B cell (primary cell): ENCODE measurements at regions of chr7 and their contacts with region 1.

Region 1: GRCh38 chr7:150404805-150405583 is 25.9 kb downstream of the ZNF775 start:
- DNase-seq: peak; percentile 93
- ATAC-seq: peak; percentile 50
- H3K4me3 ChIP-seq: peak overlapping the region; percentile 61 to 90 (median 74)
- H3K4me3 Mint-ChIP-seq: peak overlapping the region; percentile 97
- H3K27ac ChIP-seq: peak overlapping the region; percentile 93 to 97
- H3K27ac Mint-ChIP-seq: peak overlapping the region; percentile 100
- H3K4me1 ChIP-seq: peaks cover 49 to 63% of the 10 kb centered on the region in 2 donors
- H3K4me1 Mint-ChIP-seq: peaks cover 62% of the 10 kb centered on the region
- H3K27me3 ChIP-seq: no peaks in the 10 kb centered on the region
- H3K27me3 Mint-ChIP-seq: no peaks in the 10 kb centered on the region
- CTCF ChIP-seq: peak; percentile 25

Region 2: DNA sequence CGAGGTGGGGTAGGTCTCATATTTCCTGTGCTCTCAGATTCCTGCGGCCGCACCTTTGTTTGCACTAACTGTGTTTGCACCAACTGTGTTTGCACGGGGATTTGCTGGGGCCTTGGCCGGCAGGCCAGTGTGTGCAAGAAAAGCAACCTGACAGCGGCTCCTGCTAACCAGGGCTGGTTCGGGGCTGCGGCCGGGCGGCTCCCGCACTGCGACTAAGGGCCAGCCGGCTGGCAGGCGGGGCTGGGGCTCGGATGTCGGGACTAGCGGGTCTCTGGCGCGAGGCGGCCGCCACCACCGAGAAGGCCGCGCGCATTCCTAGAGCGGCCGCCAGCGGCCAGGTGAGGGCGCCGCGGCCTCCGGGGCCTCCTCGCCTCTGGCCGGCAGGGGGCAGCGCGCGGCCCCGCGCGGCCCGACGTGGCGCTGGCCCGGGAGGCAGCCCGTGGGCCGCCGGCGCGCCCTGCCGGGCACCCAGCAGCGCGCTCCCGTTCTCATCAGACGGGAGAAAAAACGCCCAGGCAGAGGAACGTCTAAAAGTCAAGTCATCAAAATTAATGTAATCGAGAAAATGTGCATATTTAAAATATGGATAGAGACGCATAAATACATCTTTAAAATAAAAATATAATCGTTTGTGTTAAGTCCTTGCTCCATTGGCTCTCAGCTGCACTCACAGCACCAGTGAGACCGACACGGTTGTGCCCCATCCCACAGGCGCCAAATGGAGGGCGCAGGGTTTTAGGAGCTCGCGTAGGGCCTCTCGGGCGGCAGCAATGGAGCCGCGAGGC is 982.7 kb before region 1 on chr7:
- CTCF ChIA-PET with region 1: no interaction called
- POLR2A ChIA-PET with region 1: no interaction called
- intact Hi-C with region 1: loop called (anchors 10 kb)
- DNase-seq: peak; percentile 89
- ATAC-seq: peak; percentile 98
- H3K4me3 ChIP-seq: peak overlapping the region; percentile 58 to 71 (median 60)
- H3K4me3 Mint-ChIP-seq: peak overlapping the region; percentile 83
- H3K27ac ChIP-seq: peak overlapping the region; percentile 20 to 73
- H3K27ac Mint-ChIP-seq: peak overlapping the region; percentile 81
- H3K4me1 ChIP-seq: peaks cover 10 to 12% of the 10 kb centered on the region in 2 donors
- H3K4me1 Mint-ChIP-seq: peaks cover 8% of the 10 kb centered on the region
- H3K27me3 ChIP-seq: no peaks in the 10 kb centered on the region
- H3K27me3 Mint-ChIP-seq: no peaks in the 10 kb centered on the region
- CTCF ChIP-seq: peak; percentile 63

Region 3: DNA sequence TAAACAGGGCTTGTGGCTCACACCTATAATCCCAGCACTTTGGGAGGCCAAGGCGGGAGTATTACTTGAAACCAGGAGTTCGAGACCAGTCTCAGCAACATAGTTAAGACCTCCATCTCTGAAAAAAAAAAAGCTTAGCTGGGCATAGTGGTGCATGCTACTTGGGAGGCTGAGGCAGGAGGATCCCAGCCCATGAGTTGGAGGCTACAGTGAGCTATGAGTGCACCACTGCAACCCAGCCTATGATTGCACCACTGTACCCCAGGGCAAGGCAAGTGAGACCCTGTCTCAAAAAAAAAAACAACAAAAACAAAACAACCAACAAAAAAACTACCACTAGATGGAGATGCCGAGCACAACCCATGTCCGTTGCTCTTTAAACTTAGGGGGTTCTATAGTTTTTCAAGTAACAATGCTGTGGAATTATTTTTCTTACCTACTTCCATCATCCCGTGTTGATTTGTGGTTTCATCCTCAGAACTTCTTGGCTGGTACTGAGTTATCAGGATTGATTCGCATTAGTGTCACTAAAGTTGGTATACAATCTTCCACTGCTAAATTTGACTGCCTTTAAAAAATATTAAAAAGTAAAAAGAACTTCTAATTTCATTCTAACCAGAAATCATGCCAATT is 48.6 kb before region 1 on chr7:
- CTCF ChIA-PET with region 1: interaction called, 40 read pairs
- POLR2A ChIA-PET with region 1: no interaction called
- intact Hi-C with region 1: loop called (anchors 1 kb)
- DNase-seq: peak; percentile 75
- ATAC-seq: peak; percentile 56
- H3K4me3 ChIP-seq: no peak overlapping the region
- H3K4me3 Mint-ChIP-seq: no peak overlapping the region
- H3K27ac ChIP-seq: no peak overlapping the region
- H3K27ac Mint-ChIP-seq: no peak overlapping the region
- H3K4me1 ChIP-seq: peaks cover 11 to 19% of the 10 kb centered on the region in 2 donors
- H3K4me1 Mint-ChIP-seq: peaks cover 21% of the 10 kb centered on the region
- H3K27me3 ChIP-seq: no peaks in the 10 kb centered on the region
- H3K27me3 Mint-ChIP-seq: no peaks in the 10 kb centered on the region
- CTCF ChIP-seq: peak; percentile 89

Region 4: DNA sequence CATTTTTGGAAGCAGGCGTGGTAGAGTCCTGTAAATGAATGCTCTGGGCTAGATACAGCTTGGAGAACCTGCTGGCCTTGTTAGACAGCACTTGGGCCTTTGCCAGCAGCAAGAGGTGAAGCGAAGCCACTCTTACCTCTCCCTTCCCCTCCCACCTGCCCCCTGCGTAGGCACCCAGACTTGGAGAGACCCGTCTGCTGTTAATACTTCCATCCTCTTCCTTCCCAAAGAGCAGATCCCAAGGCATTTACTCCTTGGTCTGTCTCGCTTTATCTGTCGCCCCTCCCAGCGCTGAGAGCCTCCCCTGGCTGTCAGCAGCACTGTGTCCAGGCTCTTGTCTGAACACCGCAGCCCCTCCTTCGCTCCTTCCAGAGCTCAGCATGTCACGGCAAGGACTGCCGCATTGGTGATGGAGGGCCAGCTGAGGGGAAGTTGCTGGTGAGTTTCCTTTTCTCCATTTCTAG is 31.6 kb before region 1 on chr7:
- CTCF ChIA-PET with region 1: interaction called, 71 read pairs
- POLR2A ChIA-PET with region 1: interaction called, 120 read pairs
- intact Hi-C with region 1: no loop called
- DNase-seq: no peak
- ATAC-seq: no peak
- H3K4me3 ChIP-seq: no peak overlapping the region
- H3K4me3 Mint-ChIP-seq: peak overlapping the region; percentile 56
- H3K27ac ChIP-seq: peak overlapping the region in 1 of 2 donors; percentile 36
- H3K27ac Mint-ChIP-seq: peak overlapping the region; percentile 72
- H3K4me1 ChIP-seq: peaks cover 23 to 58% of the 10 kb centered on the region in 2 donors
- H3K4me1 Mint-ChIP-seq: peaks cover 76% of the 10 kb centered on the region
- H3K27me3 ChIP-seq: no peaks in the 10 kb centered on the region
- H3K27me3 Mint-ChIP-seq: no peaks in the 10 kb centered on the region
- CTCF ChIP-seq: no peak

Region 5: DNA sequence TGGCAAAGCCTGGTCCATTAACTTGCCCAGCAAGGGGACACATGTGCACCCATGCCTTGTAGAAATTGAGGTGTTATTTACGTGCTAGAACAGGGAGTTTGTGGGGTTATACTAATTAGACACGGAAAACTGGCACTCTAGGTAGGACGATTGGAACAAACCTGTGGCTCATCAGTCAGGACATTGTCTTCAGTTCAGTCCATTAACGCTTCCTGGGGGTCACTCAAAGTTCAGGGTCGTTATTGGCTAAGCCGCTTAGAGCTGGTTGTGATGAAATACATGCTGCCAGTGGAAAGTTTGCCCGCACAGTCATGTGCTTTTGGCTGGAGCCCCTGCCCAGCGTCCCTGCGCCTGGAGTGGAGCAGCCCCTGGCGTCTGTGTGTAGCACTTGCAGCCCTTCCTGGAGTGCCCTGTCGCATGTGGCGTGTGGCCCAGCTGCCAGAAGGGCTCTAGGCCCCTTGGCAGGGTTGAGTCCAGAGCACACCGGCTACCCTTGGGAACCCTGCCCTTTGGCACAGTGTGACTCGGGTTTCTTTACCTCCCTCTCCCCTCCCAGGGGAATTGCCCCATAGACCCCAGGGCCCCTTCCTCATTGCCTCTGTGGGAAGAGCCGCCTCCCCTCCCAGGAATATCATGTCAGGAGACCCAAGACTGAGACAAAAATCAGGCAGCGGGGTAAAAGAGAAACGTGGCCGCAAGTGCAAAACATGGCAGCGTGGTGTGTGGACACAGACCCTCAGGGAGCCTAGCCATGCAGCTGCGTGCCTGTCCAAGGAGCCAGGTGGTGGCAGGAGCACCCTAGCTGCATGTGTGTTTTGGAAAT is 16.1 kb before region 1 on chr7:
- CTCF ChIA-PET with region 1: interaction called, 4 read pairs
- POLR2A ChIA-PET with region 1: interaction called, 11 read pairs
- intact Hi-C with region 1: no loop called
- DNase-seq: no peak
- ATAC-seq: peak; percentile 39
- H3K4me3 ChIP-seq: no peak overlapping the region
- H3K4me3 Mint-ChIP-seq: no peak overlapping the region
- H3K27ac ChIP-seq: no peak overlapping the region
- H3K27ac Mint-ChIP-seq: no peak overlapping the region
- H3K4me1 ChIP-seq: no peaks in the 10 kb centered on the region
- H3K4me1 Mint-ChIP-seq: no peaks in the 10 kb centered on the region
- H3K27me3 ChIP-seq: no peaks in the 10 kb centered on the region
- H3K27me3 Mint-ChIP-seq: no peaks in the 10 kb centered on the region
- CTCF ChIP-seq: no peak

Region 6: DNA sequence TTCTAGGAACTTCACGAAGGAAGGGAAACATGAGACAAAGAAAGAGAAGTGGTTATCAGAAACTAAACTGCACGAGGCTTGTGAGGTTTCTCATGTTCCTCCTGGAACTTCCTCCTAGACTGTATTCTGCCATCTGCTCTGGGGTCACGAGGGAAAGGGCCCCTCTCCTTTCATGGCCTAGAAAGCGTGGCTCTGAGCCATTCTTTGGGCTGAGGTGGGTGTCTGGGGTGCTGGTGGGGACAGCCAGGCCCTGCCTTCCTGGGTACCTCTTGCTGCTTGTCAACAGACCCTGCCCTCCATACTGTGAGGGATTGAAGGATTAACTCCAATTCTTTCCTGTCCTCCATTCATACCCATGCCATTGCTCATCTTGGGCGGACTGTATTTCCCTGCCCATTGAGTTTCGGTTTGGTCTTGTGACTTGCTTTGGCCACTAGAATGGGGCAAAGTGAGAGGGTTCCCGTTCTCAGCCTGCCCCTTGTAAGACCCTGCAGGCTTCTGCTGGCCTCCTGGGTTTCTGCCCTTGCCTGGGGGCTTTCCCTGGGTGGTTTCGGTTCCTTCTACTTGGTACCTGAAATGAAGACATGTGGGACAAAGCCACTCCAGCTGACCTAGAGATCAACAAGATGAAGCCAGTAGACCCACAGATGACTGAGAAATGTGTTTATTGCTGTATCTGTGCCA is 30.5 kb after region 1 on chr7:
- CTCF ChIA-PET with region 1: interaction called, 5 read pairs
- POLR2A ChIA-PET with region 1: interaction called, 6 read pairs
- intact Hi-C with region 1: loop called (anchors 1 kb)
- DNase-seq: peak; percentile 94
- ATAC-seq: peak; percentile 92
- H3K4me3 ChIP-seq: peak overlapping the region in 1 of 5 experiments; percentile 26
- H3K4me3 Mint-ChIP-seq: peak overlapping the region; percentile 73
- H3K27ac ChIP-seq: peak overlapping the region; percentile 98 to 99
- H3K27ac Mint-ChIP-seq: peak overlapping the region; percentile 95
- H3K4me1 ChIP-seq: peaks cover 40 to 43% of the 10 kb centered on the region in 2 donors
- H3K4me1 Mint-ChIP-seq: peaks cover 59% of the 10 kb centered on the region
- H3K27me3 ChIP-seq: no peaks in the 10 kb centered on the region
- H3K27me3 Mint-ChIP-seq: no peaks in the 10 kb centered on the region
- CTCF ChIP-seq: no peak

Region 7: GRCh38 chr7:151028131-151028947 is 623.3 kb after region 1 on chr7 and contains the start of gene ABCB8:
- CTCF ChIA-PET with region 1: no interaction called
- POLR2A ChIA-PET with region 1: no interaction called
- intact Hi-C with region 1: loop called (anchors 1 kb)
- DNase-seq: peak; percentile 99
- ATAC-seq: peak; percentile 92
- H3K4me3 ChIP-seq: peak within 1 kb of the TSS; percentile 54 to 86 (median 78)
- H3K4me3 Mint-ChIP-seq: peak within 1 kb of the TSS; percentile 97
- H3K27ac ChIP-seq: peak within 1 kb of the TSS; percentile 95 to 96
- H3K27ac Mint-ChIP-seq: peak within 1 kb of the TSS; percentile 99
- H3K4me1 ChIP-seq: peaks cover 11 to 17% of the 10 kb centered on the region in 2 donors
- H3K4me1 Mint-ChIP-seq: peaks cover 23% of the 10 kb centered on the region
- H3K27me3 ChIP-seq: peaks cover 0 to 20% (median 7%) of the 10 kb centered on the region in 4 experiments
- H3K27me3 Mint-ChIP-seq: peaks cover 7% of the 10 kb centered on the region
- CTCF ChIP-seq: peak; percentile 25
- total RNA-seq, gene ABCB8: 64.7 and 69.7 TPM in 2 replicates